Thyroid gland (tissue), 4 donors: ENCODE measurements at regions of chr2 and their contacts with region 1.

Region 1: GRCh38 chr2:201396595-201396994 is 39.5 kb upstream of the FLACC1 start:
- DNase-seq: no peak
- H3K4me3 ChIP-seq: no peak overlapping the region
- H3K27ac ChIP-seq: no peak overlapping the region
- H3K4me1 ChIP-seq: peaks cover 5 to 6% of the 10 kb centered on the region in 2 donors
- H3K27me3 ChIP-seq: no peaks in the 10 kb centered on the region
- CTCF ChIP-seq: no peak
- POLR2A ChIP-seq: no peak

Region 2: GRCh38 chr2:201451292-201452057 is 54.9 kb after region 1 on chr2 and contains the starts of genes STRADB and TRAK2:
- intact Hi-C with region 1: loop called (anchors 10 kb)
- DNase-seq: peak; percentile 94 to 95
- H3K4me3 ChIP-seq: peak within 1 kb of the TSS; percentile 85 to 93 (median 88)
- H3K27ac ChIP-seq: peak within 1 kb of the TSS; percentile 75 to 93 (median 90)
- H3K4me1 ChIP-seq: peaks cover 26 to 37% of the 10 kb centered on the region in 2 donors
- H3K27me3 ChIP-seq: no peaks in the 10 kb centered on the region
- CTCF ChIP-seq: peak in 4 of 6 experiments; percentile 28 to 48 (median 36)
- POLR2A ChIP-seq: peak; percentile 65 to 92
- total RNA-seq, gene STRADB: 25.6 to 41.9 (median 31.4) TPM
- total RNA-seq, gene TRAK2: 71.7 to 89.6 (median 79.7) TPM